ENCODE measurements at regions of chr16 and their contacts with region 1.

Region 1: GRCh38 chr16:234468-235305 is at the start of gene FAM234A:
- DNase-seq: peak; percentile 98
- H3K4me3 Mint-ChIP-seq: peak within 1 kb of the TSS; percentile 90
- H3K27ac Mint-ChIP-seq: peak within 1 kb of the TSS; percentile 93
- H3K4me1 Mint-ChIP-seq: no peaks in the 10 kb centered on the region
- H3K27me3 Mint-ChIP-seq: no peaks in the 10 kb centered on the region
- CTCF ChIP-seq: peak; percentile 65
- total RNA-seq, gene FAM234A: 118 and 130 TPM in 2 replicates

Region 2: GRCh38 chr16:855471-855870 is 620.8 kb after region 1 on chr16:
- CTCF ChIA-PET with region 1: interaction called, 10 read pairs
- intact Hi-C with region 1: no loop called
- DNase-seq: no peak
- H3K4me3 Mint-ChIP-seq: no peak overlapping the region
- H3K27ac Mint-ChIP-seq: no peak overlapping the region
- H3K4me1 Mint-ChIP-seq: no peaks in the 10 kb centered on the region
- H3K27me3 Mint-ChIP-seq: no peaks in the 10 kb centered on the region
- CTCF ChIP-seq: no peak

Region 3: DNA sequence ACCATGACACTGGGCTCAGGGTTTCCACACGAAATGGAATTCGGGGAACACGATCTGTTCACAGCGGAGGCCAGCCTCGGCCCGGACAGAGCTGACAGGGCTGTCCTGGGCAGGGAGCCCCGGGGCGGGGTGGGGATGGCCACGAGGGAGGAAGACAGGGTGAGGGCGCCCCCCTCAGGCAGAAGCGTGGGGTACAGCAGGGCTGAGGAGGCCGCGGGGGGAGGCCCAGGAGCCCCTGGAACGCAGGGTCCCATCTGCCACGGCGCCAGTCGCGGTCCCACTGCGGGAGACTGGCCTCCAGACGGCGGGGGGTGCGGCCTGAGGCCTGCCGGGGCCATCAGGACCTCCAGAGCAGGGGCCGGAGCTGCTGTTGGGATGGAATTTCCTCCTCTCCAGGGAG is 660.2 kb after region 1 on chr16:
- CTCF ChIA-PET with region 1: no interaction called
- intact Hi-C with region 1: no loop called
- DNase-seq: no peak
- H3K4me3 Mint-ChIP-seq: no peak overlapping the region
- H3K27ac Mint-ChIP-seq: no peak overlapping the region
- H3K4me1 Mint-ChIP-seq: no peaks in the 10 kb centered on the region
- H3K27me3 Mint-ChIP-seq: no peaks in the 10 kb centered on the region
- CTCF ChIP-seq: peak; percentile 34